ENCODE measurements at regions of chr12 and their contacts with region 1.

Region 1: GRCh38 chr12:111636209-111636945 is 37.3 kb upstream of the ATXN2 start:
- DNase-seq: no peak
- H3K4me3 ChIP-seq: peak overlapping the region in 2 of 4 donors; percentile 7
- H3K27ac ChIP-seq: peak overlapping the region; percentile 36 to 75 (median 64)
- H3K4me1 ChIP-seq: peaks cover 4 to 23% (median 4%) of the 10 kb centered on the region in 3 donors
- H3K27me3 ChIP-seq: no peaks in the 10 kb centered on the region
- CTCF ChIP-seq: no peak
- POLR2A ChIP-seq: no peak

Region 2: DNA sequence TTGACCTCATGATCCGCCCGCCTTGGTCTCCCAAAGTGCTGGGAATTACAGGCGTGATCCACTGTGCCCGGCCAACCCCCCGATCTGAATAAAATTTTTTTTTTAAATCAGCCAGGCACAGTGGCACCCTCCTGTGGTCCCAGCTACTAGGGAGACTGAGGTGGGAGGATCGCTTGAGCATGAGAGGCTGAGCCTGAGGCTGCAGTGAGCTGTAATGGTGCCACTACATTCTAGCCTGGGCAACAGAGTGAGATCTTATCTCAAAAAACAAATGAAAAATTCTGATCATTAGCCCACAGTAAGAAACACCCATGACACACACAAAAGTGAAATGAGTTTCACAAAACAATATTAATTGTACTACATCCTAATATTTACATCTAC is 16.6 kb after region 1 on chr12:
- intact Hi-C with region 1: loop called (anchors 1 kb)
- DNase-seq: no peak
- H3K4me3 ChIP-seq: no peak overlapping the region
- H3K27ac ChIP-seq: no peak overlapping the region
- H3K4me1 ChIP-seq: no peaks in the 10 kb centered on the region
- H3K27me3 ChIP-seq: no peaks in the 10 kb centered on the region
- CTCF ChIP-seq: no peak
- POLR2A ChIP-seq: no peak